ENCODE measurements at regions of chr4 and their contacts with region 1.

Region 1: GRCh38 chr4:77599378-77599777 is 6.2 kb upstream of the CXCL13 start:
- DNase-seq: peak; percentile 64
- H3K4me3 ChIP-seq: no peak overlapping the region
- H3K27ac ChIP-seq: no peak overlapping the region
- H3K4me1 ChIP-seq: no peaks in the 10 kb centered on the region
- H3K27me3 ChIP-seq: peaks cover 93% of the 10 kb centered on the region

Region 2: DNA sequence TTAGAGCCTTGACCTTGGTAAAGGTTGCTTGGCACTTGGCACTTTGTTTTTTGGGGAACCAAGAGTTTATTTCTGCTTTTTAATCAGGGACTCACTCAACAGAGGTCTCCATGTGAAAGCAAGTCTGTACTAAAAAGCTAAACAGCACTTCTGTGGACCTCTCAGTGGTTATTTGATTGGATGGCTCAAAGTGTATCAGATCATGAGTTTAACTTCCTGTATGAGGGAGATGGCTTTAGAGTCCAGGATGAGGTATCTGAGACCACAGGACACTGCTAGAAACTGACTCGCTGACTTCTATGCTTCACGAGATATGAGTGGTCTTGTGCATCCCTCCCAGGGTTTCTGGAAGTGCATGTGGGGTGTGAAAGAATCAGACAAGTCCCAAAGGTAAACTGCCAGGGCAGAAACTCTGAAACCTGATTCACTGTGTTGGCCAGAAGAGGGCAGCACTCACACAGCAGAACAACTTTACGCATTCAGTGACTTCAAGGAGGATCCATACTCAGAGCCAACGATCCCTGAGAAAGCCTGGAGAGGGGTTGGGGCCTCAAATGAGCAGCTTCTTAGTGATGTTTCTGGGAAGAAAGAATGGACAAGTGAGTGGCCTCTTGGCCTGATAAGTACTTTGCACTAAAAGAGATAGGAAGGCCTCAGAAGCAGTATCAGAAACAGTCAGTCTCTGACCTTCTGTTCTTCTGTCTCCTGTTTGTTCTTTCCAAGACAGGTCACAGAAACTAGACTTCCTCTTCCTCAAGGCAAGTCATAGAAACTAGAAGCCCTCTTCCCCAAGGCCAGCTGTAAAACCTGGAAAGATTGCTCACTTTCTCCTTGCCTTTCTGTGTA is 214.0 kb before region 1 on chr4:
- in situ Hi-C with region 1: loop called (anchors 5 kb)
- DNase-seq: peak; percentile 77
- H3K4me3 ChIP-seq: no peak overlapping the region
- H3K27ac ChIP-seq: no peak overlapping the region
- H3K4me1 ChIP-seq: no peaks in the 10 kb centered on the region
- H3K27me3 ChIP-seq: peaks cover 46% of the 10 kb centered on the region